MCF 10A (cell line): ENCODE measurements at regions of chrX and their contacts with region 1.

Region 1: DNA sequence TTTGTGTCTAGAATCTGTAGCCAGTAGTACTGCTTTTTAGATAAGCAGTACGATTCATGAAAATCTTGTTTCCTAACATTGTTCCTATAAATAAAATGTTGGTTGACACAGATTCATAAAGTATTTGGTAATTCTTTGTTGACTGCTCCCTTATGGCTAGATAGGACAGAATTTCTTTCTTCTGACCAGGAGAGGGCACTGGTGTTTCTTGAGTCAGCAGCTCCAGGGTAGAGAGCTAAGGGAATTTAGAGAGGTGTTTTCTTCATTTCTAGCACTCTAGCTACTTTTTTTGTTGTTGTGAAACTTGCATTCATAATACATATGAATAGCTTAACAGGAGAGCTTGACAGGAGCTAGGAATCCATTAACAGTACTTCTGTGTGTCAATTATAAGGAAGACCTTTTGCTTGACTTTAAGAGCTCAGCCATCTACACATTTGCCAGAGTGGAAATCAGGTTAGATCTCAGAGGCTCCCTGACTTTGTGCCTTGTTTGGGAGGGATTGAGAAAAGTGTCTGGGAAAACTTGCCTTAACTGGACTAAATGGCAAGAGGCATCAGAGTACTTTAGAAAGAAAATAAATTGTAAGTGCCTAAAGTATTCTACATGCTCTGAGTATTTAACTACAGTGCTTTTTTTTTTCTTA is 756.1 kb downstream of the SH3BGRL start:
- DNase-seq: peak; percentile 66
- H3K4me3 Mint-ChIP-seq: no peak overlapping the region
- H3K27ac Mint-ChIP-seq: no peak overlapping the region
- H3K4me1 Mint-ChIP-seq: no peaks in the 10 kb centered on the region
- H3K27me3 Mint-ChIP-seq: no peaks in the 10 kb centered on the region
- CTCF ChIP-seq: peak; percentile 56

Region 2: GRCh38 chrX:81489987-81490386 is 468.0 kb before region 1 on chrX:
- CTCF ChIA-PET with region 1: interaction called, 6 read pairs
- POLR2A ChIA-PET with region 1: no interaction called
- intact Hi-C with region 1: loop called (anchors 5 kb)
- DNase-seq: peak; percentile 34
- H3K4me3 Mint-ChIP-seq: no peak overlapping the region
- H3K27ac Mint-ChIP-seq: no peak overlapping the region
- H3K4me1 Mint-ChIP-seq: no peaks in the 10 kb centered on the region
- H3K27me3 Mint-ChIP-seq: no peaks in the 10 kb centered on the region
- CTCF ChIP-seq: peak; percentile 20

Region 3: DNA sequence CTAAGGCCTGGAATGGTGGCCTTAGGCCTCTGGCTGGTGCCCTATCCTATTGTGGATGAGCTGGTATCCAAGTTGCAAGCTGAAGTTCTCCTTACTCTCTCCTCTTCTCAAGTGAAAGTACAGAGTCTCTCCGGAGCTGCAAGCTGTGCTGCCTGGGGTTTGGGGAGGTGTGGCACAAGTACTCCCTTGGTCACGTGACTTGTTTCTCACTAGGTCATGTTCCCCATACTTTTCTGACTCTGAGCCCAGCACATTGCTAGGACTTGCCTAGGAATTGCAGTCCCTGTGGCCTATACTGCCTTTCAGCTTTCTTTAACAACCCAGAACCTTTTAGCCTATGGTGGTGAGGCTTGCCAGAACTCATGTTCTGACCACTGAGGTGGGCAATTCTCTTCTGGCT is 139.6 kb before region 1 on chrX:
- CTCF ChIA-PET with region 1: no interaction called
- POLR2A ChIA-PET with region 1: no interaction called
- intact Hi-C with region 1: no loop called
- DNase-seq: no peak
- H3K4me3 Mint-ChIP-seq: no peak overlapping the region
- H3K27ac Mint-ChIP-seq: no peak overlapping the region
- H3K4me1 Mint-ChIP-seq: no peaks in the 10 kb centered on the region
- H3K27me3 Mint-ChIP-seq: no peaks in the 10 kb centered on the region
- CTCF ChIP-seq: no peak

Region 4: DNA sequence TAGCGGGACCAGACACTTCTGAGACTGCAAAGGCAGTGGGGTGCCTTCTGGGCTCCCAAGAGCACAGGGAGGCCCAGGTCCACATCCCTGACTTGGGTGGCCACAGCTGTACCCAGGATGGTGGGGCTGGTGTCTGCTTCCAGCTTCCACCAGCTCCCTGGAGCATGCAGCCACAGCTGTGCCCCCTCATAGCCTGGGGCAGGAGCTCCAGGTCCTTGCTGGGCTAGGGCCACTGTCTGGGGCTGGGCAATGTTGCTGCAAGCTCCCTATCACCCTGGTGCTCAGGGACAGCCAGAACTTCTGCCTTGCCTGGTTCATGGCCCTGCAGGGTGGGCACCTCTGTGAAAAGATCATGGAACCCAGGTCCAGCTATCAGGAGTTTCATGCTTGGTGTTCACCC is 82.2 kb before region 1 on chrX:
- CTCF ChIA-PET with region 1: no interaction called
- POLR2A ChIA-PET with region 1: no interaction called
- intact Hi-C with region 1: no loop called
- DNase-seq: no peak
- H3K4me3 Mint-ChIP-seq: no peak overlapping the region
- H3K27ac Mint-ChIP-seq: no peak overlapping the region
- H3K4me1 Mint-ChIP-seq: no peaks in the 10 kb centered on the region
- H3K27me3 Mint-ChIP-seq: no peaks in the 10 kb centered on the region
- CTCF ChIP-seq: no peak

Region 5: GRCh38 chrX:82208975-82209374 is 251.0 kb after region 1 on chrX:
- CTCF ChIA-PET with region 1: no interaction called
- POLR2A ChIA-PET with region 1: no interaction called
- intact Hi-C with region 1: no loop called
- DNase-seq: no peak
- H3K4me3 Mint-ChIP-seq: no peak overlapping the region
- H3K27ac Mint-ChIP-seq: no peak overlapping the region
- H3K4me1 Mint-ChIP-seq: no peaks in the 10 kb centered on the region
- H3K27me3 Mint-ChIP-seq: peaks cover 12% of the 10 kb centered on the region
- CTCF ChIP-seq: no peak

Region 6: DNA sequence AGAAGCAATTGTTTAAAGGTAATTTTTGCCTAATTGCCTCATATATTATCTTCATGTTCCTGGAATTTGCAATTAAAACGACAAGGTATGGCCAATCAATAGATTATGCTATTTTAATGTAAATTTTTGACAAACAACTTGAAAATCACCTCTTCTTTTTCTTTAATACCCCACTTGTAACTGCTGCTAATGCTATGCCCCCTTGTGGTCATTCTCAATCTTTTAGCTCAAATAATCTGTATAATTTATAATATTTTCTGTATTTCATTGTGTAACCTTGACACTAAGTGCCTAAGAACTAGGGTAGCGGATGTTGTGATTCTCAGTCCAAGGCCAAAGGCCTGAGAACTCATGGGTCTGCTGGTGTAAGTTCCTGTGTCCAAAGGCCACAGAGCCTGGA is 718.4 kb after region 1 on chrX:
- CTCF ChIA-PET with region 1: no interaction called
- POLR2A ChIA-PET with region 1: no interaction called
- intact Hi-C with region 1: loop called (anchors 5 kb)
- DNase-seq: peak; percentile 23
- H3K4me3 Mint-ChIP-seq: no peak overlapping the region
- H3K27ac Mint-ChIP-seq: peak overlapping the region; percentile 29
- H3K4me1 Mint-ChIP-seq: no peaks in the 10 kb centered on the region
- H3K27me3 Mint-ChIP-seq: no peaks in the 10 kb centered on the region
- CTCF ChIP-seq: peak; percentile 35

Region 7: DNA sequence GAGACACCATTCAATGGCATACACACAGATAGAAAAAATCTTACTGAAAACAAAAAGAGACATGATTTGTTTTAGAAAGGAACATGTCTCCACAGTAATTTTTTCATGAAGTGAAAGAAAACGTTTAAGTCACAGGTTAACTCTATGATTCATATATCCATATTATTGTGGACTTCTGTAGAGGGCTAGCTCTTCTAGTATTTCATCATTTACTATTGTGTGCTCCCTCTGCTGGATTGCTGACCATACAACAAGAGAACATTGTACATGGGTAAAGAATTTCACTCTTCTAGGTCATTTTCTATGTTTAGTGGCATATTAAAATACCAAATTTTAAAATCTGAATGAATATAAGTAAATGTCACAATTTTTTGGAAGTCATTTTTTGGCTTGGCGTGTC is 1458.2 kb after region 1 on chrX:
- CTCF ChIA-PET with region 1: interaction called, 4 read pairs
- POLR2A ChIA-PET with region 1: no interaction called
- intact Hi-C with region 1: loop called (anchors 1 kb)
- DNase-seq: peak; percentile 51
- H3K4me3 Mint-ChIP-seq: no peak overlapping the region
- H3K27ac Mint-ChIP-seq: no peak overlapping the region
- H3K4me1 Mint-ChIP-seq: no peaks in the 10 kb centered on the region
- H3K27me3 Mint-ChIP-seq: no peaks in the 10 kb centered on the region
- CTCF ChIP-seq: peak; percentile 52

Region 8: GRCh38 chrX:83529950-83530349 is 1571.9 kb after region 1 on chrX:
- CTCF ChIA-PET with region 1: no interaction called
- POLR2A ChIA-PET with region 1: no interaction called
- intact Hi-C with region 1: loop called (anchors 5 kb)
- DNase-seq: peak; percentile 11
- H3K4me3 Mint-ChIP-seq: no peak overlapping the region
- H3K27ac Mint-ChIP-seq: no peak overlapping the region
- H3K4me1 Mint-ChIP-seq: no peaks in the 10 kb centered on the region
- H3K27me3 Mint-ChIP-seq: peaks cover 32% of the 10 kb centered on the region
- CTCF ChIP-seq: no peak

Region 9: DNA sequence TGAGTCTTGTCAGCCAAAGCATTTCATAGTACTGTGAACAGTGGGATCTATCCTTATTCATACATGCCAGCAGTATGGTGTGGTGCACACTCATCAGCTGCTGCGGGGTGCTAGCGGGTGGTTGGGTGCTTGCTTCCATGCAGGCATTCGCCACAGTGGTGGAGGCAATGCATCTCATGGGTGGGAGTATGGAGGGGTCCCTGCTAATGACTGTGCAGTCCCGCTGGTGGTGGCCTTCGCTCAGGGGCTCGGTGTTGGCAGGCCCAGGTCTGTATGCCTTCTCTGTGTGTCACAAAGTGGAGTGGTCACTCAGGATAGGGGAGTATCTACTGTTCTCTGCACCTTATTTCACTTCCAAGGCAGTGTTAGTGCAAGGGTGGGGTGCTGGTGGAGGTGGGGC is 1672.6 kb after region 1 on chrX:
- CTCF ChIA-PET with region 1: interaction called, 3 read pairs
- POLR2A ChIA-PET with region 1: no interaction called
- intact Hi-C with region 1: loop called (anchors 5 kb)
- DNase-seq: no peak
- H3K4me3 Mint-ChIP-seq: no peak overlapping the region
- H3K27ac Mint-ChIP-seq: no peak overlapping the region
- H3K4me1 Mint-ChIP-seq: peaks cover 6% of the 10 kb centered on the region
- H3K27me3 Mint-ChIP-seq: no peaks in the 10 kb centered on the region
- CTCF ChIP-seq: no peak

Region 10: DNA sequence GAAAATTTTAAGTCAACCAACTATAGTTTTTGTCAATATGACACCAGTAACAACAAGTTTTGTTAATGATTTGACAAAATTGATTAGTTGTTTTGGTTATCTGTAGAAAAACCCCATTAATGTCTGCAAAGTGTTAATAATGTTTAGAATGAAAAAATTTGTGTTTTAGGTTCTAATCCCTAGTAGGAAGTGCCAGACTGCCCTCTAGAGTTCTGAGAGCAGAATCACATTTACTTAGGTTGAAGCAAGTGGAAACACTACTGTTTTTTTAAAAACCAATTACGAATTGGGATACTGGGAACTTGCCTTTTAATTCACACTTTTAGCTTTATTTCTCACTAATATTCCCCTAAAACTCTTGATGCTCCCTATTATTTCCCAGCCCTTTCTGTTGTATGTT is 1801.8 kb after region 1 on chrX:
- CTCF ChIA-PET with region 1: interaction called, 3 read pairs
- POLR2A ChIA-PET with region 1: no interaction called
- intact Hi-C with region 1: loop called (anchors 10 kb)
- DNase-seq: peak; percentile 76
- H3K4me3 Mint-ChIP-seq: no peak overlapping the region
- H3K27ac Mint-ChIP-seq: no peak overlapping the region
- H3K4me1 Mint-ChIP-seq: peaks cover 12% of the 10 kb centered on the region
- H3K27me3 Mint-ChIP-seq: no peaks in the 10 kb centered on the region
- CTCF ChIP-seq: peak; percentile 74